ENCODE measurements at regions of chr6 and their contacts with region 1.

Region 1: DNA sequence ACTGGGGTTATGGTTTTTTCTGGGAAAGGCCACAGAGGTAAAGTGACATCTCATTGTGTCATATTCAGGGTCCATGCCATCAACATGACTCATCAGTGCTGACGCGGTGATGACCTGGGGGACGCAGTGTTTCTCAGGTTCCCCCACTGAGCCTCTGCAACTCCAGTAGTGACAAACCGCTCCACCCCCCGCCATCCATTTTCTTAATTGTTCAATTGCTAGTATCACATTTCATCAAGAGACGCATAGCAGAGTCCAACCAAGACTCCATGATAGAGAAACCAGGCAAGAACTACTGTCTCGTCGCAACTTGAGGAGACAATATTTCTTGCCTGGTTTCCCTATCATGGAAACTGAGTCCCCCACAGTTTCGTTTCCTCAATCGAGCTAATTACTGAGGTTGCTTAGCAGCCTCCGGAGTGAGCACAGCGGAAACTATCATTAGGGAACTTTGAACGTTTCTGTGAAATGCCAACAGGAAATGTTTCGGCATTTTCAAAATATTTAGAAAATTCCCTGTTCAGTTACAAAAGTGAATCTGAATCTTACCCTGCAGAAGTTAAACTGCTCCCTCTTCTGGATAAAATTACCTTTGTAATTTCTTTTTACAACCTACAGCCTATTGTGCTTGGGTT is 12.2 kb upstream of the SERPINB1 start:
- DNase-seq: no peak

Region 2: GRCh38 chr6:2876210-2877056 is 22.6 kb after region 1 on chr6:
- intact Hi-C with region 1: loop called (anchors 2 kb)
- DNase-seq: peak; percentile 84

Measured in cardiac septum (tissue), 1 donor.